ENCODE measurements at regions of chr22 and their contacts with region 1.

Region 1: GRCh38 chr22:48782811-48783511 is 1044.7 kb downstream of the BRD1 start:
- DNase-seq: no peak
- H3K4me3 ChIP-seq: no peak overlapping the region
- H3K27ac ChIP-seq: no peak overlapping the region
- H3K4me1 ChIP-seq: no peaks in the 10 kb centered on the region
- H3K27me3 ChIP-seq: no peaks in the 10 kb centered on the region
- CTCF ChIP-seq: no peak

Region 2: DNA sequence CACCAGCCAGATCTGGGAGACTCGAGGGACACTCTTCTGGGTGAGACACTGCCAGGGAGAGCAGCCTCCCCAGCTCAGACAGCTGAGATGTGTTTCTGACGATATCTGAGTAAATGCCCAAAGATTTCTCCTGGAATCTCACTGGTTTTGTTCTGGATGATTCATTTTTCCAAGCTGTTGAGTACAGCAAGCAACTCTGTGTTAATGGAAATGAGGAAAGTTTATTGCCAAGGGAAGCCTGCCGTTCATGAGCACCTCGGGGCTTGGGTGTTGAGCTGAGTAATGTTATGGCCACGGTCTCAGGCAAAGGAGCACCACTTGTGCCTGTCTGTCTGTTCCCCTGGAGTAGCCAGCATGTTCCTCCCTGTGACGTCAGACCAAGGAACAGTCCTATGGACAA is 87.7 kb before region 1 on chr22:
- CTCF ChIA-PET with region 1: no interaction called
- dilution Hi-C with region 1: loop called (anchors 5 kb)
- in situ Hi-C with region 1: no loop called
- intact Hi-C with region 1: no loop called
- DNase-seq: no peak
- H3K4me3 ChIP-seq: no peak overlapping the region
- H3K27ac ChIP-seq: no peak overlapping the region
- H3K4me1 ChIP-seq: no peaks in the 10 kb centered on the region
- H3K27me3 ChIP-seq: no peaks in the 10 kb centered on the region
- CTCF ChIP-seq: no peak

Region 3: GRCh38 chr22:48743601-48744282 is 39.2 kb before region 1 on chr22:
- CTCF ChIA-PET with region 1: no interaction called
- dilution Hi-C with region 1: loop called (anchors 5 kb)
- in situ Hi-C with region 1: no loop called
- intact Hi-C with region 1: no loop called
- DNase-seq: no peak
- H3K4me3 ChIP-seq: no peak overlapping the region
- H3K27ac ChIP-seq: no peak overlapping the region
- H3K4me1 ChIP-seq: no peaks in the 10 kb centered on the region
- H3K27me3 ChIP-seq: no peaks in the 10 kb centered on the region
- CTCF ChIP-seq: no peak

Region 4: GRCh38 chr22:48807155-48807554 is 24.2 kb after region 1 on chr22:
- CTCF ChIA-PET with region 1: no interaction called
- dilution Hi-C with region 1: no loop called
- in situ Hi-C with region 1: no loop called
- intact Hi-C with region 1: no loop called
- DNase-seq: no peak
- H3K4me3 ChIP-seq: no peak overlapping the region
- H3K27ac ChIP-seq: no peak overlapping the region
- H3K4me1 ChIP-seq: no peaks in the 10 kb centered on the region
- H3K27me3 ChIP-seq: no peaks in the 10 kb centered on the region
- CTCF ChIP-seq: no peak

Region 5: DNA sequence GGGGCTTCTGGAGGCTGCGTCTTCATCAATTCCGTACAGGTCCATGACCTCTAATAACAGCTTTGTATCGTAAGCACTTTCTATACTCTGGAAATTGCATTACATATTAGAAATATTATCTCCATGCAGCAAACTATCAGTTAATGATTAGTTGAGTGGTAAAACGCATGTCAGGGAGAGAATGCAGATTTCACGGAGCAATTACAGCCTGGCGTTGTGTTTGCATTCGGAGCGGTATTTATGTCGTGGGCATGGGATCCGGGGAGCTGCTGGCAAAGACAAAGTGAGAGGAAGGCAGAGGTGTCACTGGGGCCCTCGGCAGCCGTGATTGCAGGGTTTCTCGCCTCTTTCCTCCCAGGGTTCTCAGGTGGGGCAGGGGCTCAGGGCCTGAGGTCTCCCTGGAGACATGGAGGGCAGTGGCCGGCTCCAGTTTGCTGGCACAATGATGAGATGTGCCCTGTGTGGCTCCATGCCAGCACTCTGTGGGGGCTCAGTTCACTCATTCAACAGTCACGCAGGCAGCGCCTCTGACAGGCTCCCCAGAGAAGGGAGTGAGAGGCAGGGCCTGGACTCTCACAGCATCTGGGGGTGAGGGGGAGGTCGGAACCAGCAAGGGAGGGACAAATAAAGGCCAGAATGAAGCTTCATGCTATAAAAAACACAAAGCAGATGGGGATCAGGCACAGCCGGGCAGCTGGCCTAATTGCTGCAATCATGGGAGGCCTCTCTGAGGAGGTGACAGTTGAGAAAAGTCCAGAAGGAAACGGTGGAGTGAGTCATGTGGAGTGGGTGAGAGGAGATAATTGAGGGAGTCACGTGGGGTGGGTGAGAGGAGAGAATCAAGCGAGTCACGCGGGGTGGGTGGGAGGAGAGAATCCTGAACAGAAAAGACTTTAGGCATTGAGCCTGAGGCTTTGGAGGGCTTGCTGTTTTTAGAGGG is 42.0 kb after region 1 on chr22:
- CTCF ChIA-PET with region 1: no interaction called
- dilution Hi-C with region 1: loop called (anchors 5 kb)
- in situ Hi-C with region 1: no loop called
- intact Hi-C with region 1: no loop called
- DNase-seq: no peak
- H3K4me3 ChIP-seq: no peak overlapping the region
- H3K27ac ChIP-seq: no peak overlapping the region
- H3K4me1 ChIP-seq: no peaks in the 10 kb centered on the region
- H3K27me3 ChIP-seq: no peaks in the 10 kb centered on the region
- CTCF ChIP-seq: no peak

Measured in mammary epithelial cell (primary cell).